AG04449 (cell line): ENCODE measurements at regions of chr3 and their contacts with region 1.

Region 1: GRCh38 chr3:49802719-49803464 is at the start of gene INKA1:
- DNase-seq: no peak
- H3K4me3 ChIP-seq: peak within 1 kb of the TSS; percentile 87
- CTCF ChIP-seq: peak; percentile 96

Region 2: GRCh38 chr3:49238274-49239127 is 564.4 kb before region 1 on chr3:
- CTCF ChIA-PET with region 1: no interaction called
- POLR2A ChIA-PET with region 1: no interaction called
- DNase-seq: no peak
- H3K4me3 ChIP-seq: no peak overlapping the region
- CTCF ChIP-seq: no peak

Region 3: GRCh38 chr3:49813497-49814174 is 10.7 kb after region 1 on chr3 and contains the start of gene UBA7:
- CTCF ChIA-PET with region 1: interaction called, 47 read pairs
- POLR2A ChIA-PET with region 1: interaction called, 5 read pairs
- DNase-seq: no peak
- H3K4me3 ChIP-seq: peak within 1 kb of the TSS; percentile 58
- CTCF ChIP-seq: no peak

Region 4: DNA sequence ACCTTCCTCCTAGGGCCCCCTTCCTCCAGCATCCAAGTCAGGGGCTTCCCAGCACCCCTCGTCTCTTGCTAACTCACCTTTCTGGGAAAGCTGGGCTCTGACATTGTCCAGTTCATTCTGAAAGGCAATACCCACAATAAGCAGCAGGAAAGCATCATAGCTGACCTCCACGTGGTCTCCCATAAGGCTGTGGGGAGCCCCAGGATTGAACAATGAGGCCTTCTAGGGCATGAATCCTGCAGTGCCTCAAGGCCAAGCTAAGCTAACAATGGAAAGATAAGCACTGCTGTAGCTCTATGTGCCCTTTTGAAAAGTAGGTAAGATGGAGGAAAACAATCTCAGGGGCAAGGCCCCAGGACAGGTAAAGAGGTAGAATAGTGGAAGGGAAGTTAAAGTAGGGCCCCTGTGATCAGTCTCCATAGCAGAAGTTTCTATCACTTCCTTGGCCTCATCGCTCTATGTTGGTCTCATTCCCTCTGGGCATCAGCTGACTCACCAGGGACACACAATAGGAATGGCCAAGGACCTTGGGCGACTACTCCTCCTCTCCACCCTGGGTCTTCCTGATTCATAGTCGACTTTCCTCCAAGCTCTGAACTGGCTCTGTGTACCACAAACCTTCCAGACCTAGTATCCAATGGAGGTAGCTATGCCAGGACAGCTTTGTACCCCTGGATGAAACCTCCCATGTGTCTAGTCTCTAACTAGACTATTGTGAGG is 41.7 kb after region 1 on chr3:
- CTCF ChIA-PET with region 1: interaction called, 507 read pairs
- POLR2A ChIA-PET with region 1: interaction called, 5 read pairs
- DNase-seq: no peak
- H3K4me3 ChIP-seq: no peak overlapping the region
- CTCF ChIP-seq: no peak

Region 5: DNA sequence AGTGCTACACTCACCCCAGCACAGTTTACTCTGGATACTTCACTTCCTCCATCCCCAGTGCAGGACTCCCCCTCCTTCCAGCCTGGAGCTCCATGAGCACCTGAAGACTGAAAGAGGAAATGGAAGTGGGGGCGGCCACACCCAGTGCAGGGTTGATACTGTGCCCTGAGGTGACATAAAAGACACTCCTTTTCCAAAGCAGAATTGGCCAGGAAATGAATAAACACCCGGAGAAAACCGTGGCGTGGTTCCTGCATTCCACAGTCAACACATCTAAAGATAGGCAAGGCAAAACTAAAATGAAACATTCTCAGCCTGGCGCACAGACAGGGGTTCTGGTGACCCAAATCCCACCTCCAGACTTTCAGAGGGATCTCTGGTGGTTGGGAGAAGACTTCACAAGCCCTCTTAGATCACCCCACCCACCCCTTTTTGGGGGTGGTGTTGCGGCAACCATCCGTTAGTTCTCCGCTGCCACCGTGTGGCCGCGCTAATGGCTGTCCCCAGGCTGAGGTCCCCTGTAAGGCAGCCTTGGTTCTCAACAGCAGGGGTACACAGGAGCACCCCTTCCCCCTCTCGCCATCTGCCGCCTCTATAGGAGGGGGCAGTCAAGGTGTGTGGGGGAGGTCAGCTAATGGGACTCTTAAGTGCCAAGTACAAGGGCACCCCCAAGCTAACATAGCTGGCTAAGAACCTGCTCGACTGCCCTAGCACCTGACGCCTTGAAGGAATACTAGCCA is 103.3 kb after region 1 on chr3:
- CTCF ChIA-PET with region 1: interaction called, 22 read pairs
- POLR2A ChIA-PET with region 1: no interaction called
- DNase-seq: no peak
- H3K4me3 ChIP-seq: peak overlapping the region; percentile 21
- CTCF ChIP-seq: peak; percentile 80

Region 6: DNA sequence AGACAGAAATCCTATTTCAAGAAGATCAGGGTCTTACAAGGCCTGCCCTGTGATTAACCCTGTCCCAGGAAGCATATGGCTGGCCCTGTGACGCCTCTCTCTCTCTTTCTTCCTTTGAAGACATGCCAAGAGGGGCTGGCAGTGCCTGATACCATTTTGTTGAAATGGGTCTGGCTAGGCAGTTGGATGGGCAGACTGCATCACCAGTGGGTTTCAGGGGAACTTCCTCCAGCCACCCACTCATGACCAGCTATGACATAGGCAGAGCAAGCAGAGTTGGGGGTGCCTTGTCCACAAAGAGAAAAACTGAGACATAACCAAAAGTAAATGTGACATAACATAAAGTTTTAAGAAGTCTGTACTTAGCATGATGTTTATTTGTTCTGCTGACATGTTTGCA is 1550.8 kb after region 1 on chr3:
- CTCF ChIA-PET with region 1: no interaction called
- POLR2A ChIA-PET with region 1: no interaction called
- DNase-seq: no peak
- H3K4me3 ChIP-seq: no peak overlapping the region
- CTCF ChIP-seq: no peak